Endothelial cell of umbilical vein (primary cell): ENCODE measurements at regions of chr4 and their contacts with region 1.

Region 1: DNA sequence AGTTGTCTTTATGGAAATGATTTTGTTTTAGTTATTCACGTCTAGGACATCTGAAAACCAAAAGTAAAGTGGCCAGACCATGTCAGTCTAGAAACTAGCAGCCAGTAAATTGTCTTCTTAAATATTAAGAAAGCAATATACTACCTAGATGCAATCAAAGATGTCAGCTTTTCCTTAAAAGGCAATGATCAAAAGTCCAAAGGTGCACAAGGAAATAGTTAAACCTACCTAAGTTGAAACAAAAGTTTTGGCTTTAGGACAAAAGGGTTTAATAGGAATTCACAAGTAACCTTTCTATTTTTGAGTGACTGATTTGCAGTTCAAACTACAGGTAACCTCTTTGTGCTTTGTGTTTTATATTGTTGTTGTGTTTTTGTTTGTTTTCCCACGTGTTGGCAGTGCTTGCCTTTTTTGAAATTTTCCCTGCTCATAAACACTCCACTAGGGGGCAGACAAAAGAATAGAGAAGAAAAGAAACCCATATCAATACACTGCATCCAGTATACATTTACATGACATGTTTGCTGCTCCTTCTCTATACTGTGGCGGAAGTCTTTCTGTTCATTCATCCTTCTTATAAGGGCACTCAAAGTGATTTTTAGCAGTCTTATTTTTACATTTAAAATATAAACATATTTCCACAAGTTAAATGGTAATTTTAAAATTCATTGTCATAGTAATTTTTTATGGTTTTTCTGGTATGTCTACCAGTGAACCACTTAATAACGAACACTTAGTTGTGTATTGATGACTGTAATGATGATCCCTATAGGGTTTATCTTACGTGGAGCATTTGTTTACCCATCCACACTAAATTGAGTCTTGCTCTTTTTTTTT is 62.7 kb downstream of the GAB1 start:
- DNase-seq: peak; percentile 72
- H3K4me3 ChIP-seq: no peak overlapping the region
- H3K27ac ChIP-seq: no peak overlapping the region
- H3K4me1 ChIP-seq: peaks cover 33% of the 10 kb centered on the region
- H3K27me3 ChIP-seq: no peaks in the 10 kb centered on the region
- CTCF ChIP-seq: peak; percentile 46 to 48
- POLR2A ChIP-seq: no peak

Region 2: DNA sequence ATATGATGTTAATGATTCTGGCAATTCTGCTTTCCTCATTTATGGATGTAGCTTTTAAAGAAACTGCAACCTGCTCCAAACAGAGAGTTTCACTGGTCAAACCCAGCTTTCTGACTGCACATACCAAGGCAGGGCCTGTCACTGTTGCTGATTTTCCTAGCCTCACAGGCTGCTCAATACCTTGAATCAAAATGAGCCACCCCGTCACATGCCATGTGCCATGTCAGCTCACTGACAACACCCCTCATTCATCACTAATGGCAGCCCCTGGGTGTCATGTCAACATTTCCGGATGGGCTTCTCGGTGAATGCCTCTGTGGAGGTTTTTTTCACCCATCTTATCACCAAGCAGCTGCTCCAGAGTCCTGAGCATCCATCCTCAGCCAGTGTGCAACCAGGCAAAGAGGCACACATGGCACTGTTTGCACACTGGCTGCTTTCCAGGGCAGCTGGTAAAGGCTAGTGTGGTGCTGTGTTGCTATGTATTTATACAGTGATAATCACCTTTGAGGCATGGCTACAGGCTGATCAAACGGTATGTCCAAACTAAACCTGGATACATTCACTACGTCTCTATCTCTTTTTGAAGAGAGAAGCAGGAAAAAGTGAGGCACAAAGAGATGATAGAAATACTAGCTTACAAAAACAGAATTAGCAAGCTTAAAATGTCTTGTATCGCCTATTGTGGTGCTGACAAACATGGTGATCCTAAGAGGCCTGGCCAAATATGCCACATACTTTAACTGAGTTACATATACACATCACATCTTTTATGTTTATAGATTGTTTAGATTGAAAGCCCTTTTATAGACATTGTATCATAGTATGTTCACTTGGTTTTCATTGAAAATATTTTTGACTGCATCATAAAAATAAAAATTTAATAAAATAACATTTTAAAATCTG is 458.7 kb before region 1 on chr4:
- CTCF ChIA-PET with region 1: no interaction called
- POLR2A ChIA-PET with region 1: no interaction called
- dilution Hi-C with region 1: no loop called
- intact Hi-C with region 1: no loop called
- DNase-seq: no peak
- H3K4me3 ChIP-seq: no peak overlapping the region
- H3K27ac ChIP-seq: no peak overlapping the region
- H3K4me1 ChIP-seq: no peaks in the 10 kb centered on the region
- H3K27me3 ChIP-seq: no peaks in the 10 kb centered on the region
- CTCF ChIP-seq: no peak
- POLR2A ChIP-seq: no peak

Region 3: DNA sequence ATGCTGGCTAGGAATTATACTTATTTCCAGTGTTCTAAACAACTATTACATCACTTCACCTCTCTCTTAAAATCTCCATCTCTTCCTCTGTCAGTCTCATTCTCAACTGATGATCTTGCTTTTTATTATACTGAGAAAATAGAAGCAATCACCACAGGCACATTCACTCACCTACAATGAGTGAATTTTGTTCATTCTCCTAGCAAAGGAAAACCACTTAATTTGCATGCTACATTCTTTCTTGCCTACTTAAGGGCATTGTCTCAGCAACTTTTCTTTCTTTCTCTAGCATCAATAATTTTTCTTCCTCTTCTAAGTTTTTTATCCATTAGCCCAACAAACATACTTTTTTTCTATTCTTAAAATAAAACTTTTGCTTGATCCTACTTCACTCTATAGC is 235.7 kb before region 1 on chr4:
- CTCF ChIA-PET with region 1: no interaction called
- POLR2A ChIA-PET with region 1: no interaction called
- dilution Hi-C with region 1: no loop called
- intact Hi-C with region 1: no loop called
- DNase-seq: no peak
- H3K4me3 ChIP-seq: no peak overlapping the region
- H3K27ac ChIP-seq: no peak overlapping the region
- H3K4me1 ChIP-seq: no peaks in the 10 kb centered on the region
- H3K27me3 ChIP-seq: no peaks in the 10 kb centered on the region
- CTCF ChIP-seq: no peak
- POLR2A ChIP-seq: no peak

Region 4: DNA sequence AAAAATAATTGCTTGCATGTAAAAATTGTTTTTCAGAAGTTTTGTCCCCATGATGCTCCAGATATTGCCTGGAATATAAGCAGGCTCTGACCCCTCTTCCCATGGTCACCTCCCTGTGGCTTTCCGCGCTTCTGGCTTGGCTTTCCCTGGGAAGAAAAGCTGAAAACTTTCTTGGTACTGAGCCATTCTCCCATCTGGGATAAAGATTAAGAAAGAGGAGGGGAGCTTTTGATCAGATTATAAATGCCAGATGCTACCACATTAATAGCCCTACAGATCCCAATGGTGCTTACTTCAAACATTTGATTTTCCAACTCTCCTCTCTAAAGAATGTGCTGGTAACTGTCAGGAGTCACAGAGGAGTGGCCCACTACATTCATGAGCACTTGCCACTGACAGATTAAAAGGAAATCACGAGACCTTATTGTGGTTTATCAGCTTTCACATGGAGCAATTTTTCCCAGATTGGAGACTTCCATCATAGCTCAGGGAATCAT is 117.1 kb before region 1 on chr4:
- CTCF ChIA-PET with region 1: no interaction called
- POLR2A ChIA-PET with region 1: no interaction called
- dilution Hi-C with region 1: no loop called
- intact Hi-C with region 1: no loop called
- DNase-seq: no peak
- H3K4me3 ChIP-seq: no peak overlapping the region
- H3K27ac ChIP-seq: no peak overlapping the region
- H3K4me1 ChIP-seq: no peaks in the 10 kb centered on the region
- H3K27me3 ChIP-seq: peaks cover 0 to 3% of the 10 kb centered on the region in 2 experiments
- CTCF ChIP-seq: no peak
- POLR2A ChIP-seq: no peak

Region 5: GRCh38 chr4:143375313-143376073 is 23.8 kb before region 1 on chr4:
- CTCF ChIA-PET with region 1: interaction called, 15 read pairs
- POLR2A ChIA-PET with region 1: no interaction called
- dilution Hi-C with region 1: no loop called
- intact Hi-C with region 1: no loop called
- DNase-seq: peak; percentile 58
- H3K4me3 ChIP-seq: no peak overlapping the region
- H3K27ac ChIP-seq: no peak overlapping the region
- H3K4me1 ChIP-seq: no peaks in the 10 kb centered on the region
- H3K27me3 ChIP-seq: no peaks in the 10 kb centered on the region
- CTCF ChIP-seq: peak; percentile 21 to 53
- POLR2A ChIP-seq: no peak

Region 6: DNA sequence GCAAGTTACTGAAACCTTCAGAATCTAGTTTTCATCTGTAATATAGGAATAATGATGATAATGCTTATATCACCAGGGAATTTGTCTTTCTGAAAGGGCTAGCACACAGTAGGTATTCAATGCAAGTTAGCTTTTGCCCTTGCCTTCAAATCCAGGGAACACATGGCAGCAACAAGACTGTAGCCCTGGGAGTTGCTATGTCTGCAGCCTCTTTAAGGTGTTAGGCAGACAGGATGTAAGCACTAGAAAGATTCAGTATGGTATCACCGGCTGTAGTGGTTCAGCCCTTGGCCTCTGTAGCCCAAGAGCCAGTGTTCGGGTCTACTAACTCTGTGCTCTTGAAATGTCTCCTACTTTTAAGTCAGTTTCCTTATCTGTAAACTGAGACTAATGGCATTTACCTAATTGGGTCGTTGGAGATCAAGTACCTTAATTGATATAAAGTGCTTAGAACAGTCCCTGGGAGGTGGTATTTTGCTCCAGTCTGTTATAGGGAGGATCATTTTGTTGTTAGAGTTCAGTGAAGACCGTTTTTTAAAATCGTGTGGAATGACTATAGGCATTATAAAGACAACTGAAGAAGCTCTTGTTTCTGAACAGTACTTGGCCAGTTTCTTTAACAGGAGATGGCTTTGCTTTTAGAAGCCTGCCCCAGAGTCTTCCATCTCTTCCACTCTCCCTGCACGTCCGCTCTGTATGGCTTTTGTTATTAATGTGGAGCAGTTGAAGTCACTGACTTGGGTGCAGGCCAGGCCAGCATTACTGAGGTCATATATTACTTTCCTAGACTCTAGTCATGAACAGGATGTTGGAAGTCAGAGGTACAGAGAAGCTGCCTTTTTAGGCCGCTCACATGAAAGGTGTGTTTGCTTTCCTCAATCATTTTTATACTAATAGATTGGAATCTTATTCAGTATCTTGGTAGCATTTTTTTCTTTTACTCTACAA is 17.9 kb before region 1 on chr4:
- CTCF ChIA-PET with region 1: interaction called, 23 read pairs
- POLR2A ChIA-PET with region 1: no interaction called
- dilution Hi-C with region 1: no loop called
- intact Hi-C with region 1: no loop called
- DNase-seq: peak; percentile 98
- H3K4me3 ChIP-seq: peak overlapping the region in 1 of 3 experiments; percentile 26
- H3K27ac ChIP-seq: peak overlapping the region; percentile 53
- H3K4me1 ChIP-seq: peaks cover 24% of the 10 kb centered on the region
- H3K27me3 ChIP-seq: no peaks in the 10 kb centered on the region
- CTCF ChIP-seq: no peak
- POLR2A ChIP-seq: no peak

Region 7: DNA sequence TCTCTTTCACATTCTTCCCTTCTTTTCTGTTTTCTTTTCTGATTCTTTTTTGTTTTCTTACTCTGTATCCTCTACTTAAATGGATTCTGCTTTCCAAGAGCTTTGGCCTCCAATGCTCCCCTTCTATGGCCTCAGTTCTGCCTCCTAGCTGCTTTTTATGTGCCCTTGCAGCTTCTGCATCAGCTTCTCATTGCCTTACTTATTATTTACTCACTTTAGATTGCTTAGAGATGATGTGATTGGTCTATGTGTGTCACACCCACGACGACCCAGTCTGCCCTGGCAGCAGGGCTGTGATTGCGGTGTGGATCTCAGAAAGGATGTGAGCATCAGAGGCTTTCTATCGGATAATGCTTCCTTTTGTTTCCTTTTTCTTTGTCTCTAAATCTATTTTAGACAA is 42.3 kb after region 1 on chr4:
- CTCF ChIA-PET with region 1: interaction called, 3 read pairs
- POLR2A ChIA-PET with region 1: no interaction called
- dilution Hi-C with region 1: no loop called
- intact Hi-C with region 1: loop called (anchors 2 kb)
- DNase-seq: no peak
- H3K4me3 ChIP-seq: no peak overlapping the region
- H3K27ac ChIP-seq: no peak overlapping the region
- H3K4me1 ChIP-seq: peaks cover 15% of the 10 kb centered on the region
- H3K27me3 ChIP-seq: no peaks in the 10 kb centered on the region
- CTCF ChIP-seq: no peak
- POLR2A ChIP-seq: no peak